ENCODE measurements at regions of chr4 and their contacts with region 1.

Region 1: GRCh38 chr4:139177868-139178611 is 1.0 kb upstream of the ELF2 start:
- DNase-seq: peak; percentile 96 to 98 (median 97)
- ATAC-seq: peak; percentile 82 to 89 (median 84)
- H3K4me3 ChIP-seq: peak overlapping the region; percentile 76 to 100 (median 98)
- H3K27ac ChIP-seq: peak overlapping the region; percentile 90 to 100 (median 100)
- H3K4me1 ChIP-seq: peaks cover 0 to 26% (median 14%) of the 10 kb centered on the region in 12 donors
- H3K27me3 ChIP-seq: no peaks in the 10 kb centered on the region
- CTCF ChIP-seq: peak in 2 of 12 donors; percentile 3 to 9
- POLR2A ChIP-seq: peak in 1 of 2 donors; percentile 90

Region 2: DNA sequence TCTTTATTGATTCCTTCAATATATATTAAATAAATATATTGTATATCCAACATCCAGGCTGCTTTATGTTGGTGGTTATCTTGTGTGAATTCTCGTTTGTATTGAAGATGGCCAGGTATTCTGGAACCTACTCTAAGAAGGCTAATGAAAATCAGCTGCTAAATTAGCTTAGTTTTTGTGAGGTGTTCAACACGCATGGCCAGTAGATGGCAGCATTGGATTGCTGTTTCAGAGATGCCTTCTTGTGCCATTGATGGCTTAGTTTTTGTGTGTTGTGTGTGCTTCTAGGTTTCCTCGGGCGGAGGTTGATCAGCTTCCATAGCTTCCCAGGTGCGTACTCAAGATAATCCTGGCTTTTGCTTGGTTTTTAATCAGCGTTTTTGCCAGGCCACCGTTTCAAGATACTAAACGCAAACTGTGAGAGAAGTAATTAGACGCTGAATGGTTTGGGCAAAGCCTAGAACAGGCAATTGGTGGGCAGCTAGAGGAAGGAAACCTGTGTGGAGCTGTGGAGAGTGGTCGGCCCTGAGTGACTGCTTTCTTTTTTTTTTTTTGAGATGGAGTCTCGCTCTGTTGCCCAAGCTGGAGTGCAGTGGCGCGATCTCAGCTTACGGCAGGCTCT is 147.3 kb before region 1 on chr4:
- intact Hi-C with region 1: loop called in 3 of 10 experiments (anchors 10 kb)
- DNase-seq: peak in 4 of 5 donors; percentile 63 to 75 (median 66)
- ATAC-seq: peak in 3 of 4 donors; percentile 28 to 47 (median 33)
- H3K4me3 ChIP-seq: no peak overlapping the region
- H3K27ac ChIP-seq: peak overlapping the region in 2 of 12 donors; percentile 90 to 93
- H3K4me1 ChIP-seq: peaks cover 0 to 20% (median 11%) of the 10 kb centered on the region in 12 donors
- H3K27me3 ChIP-seq: no peaks in the 10 kb centered on the region
- CTCF ChIP-seq: peak; percentile 61 to 87 (median 79)
- POLR2A ChIP-seq: no peak

Region 3: GRCh38 chr4:139099366-139099982 is 78.6 kb before region 1 on chr4:
- intact Hi-C with region 1: loop called in 8 of 10 experiments (anchors 2 to 5 kb)
- DNase-seq: peak in 4 of 5 donors; percentile 60 to 73 (median 69)
- ATAC-seq: peak in 3 of 4 donors; percentile 71 to 86 (median 77)
- H3K4me3 ChIP-seq: no peak overlapping the region
- H3K27ac ChIP-seq: no peak overlapping the region
- H3K4me1 ChIP-seq: peaks cover 0 to 5% (median 0%) of the 10 kb centered on the region in 12 donors
- H3K27me3 ChIP-seq: no peaks in the 10 kb centered on the region
- CTCF ChIP-seq: peak; percentile 77 to 93 (median 84)
- POLR2A ChIP-seq: no peak

Region 4: GRCh38 chr4:139295206-139295941 is 117.3 kb after region 1 on chr4:
- intact Hi-C with region 1: loop called in 9 of 10 experiments (anchors 1 to 5 kb)
- DNase-seq: peak; percentile 96 to 99 (median 98)
- ATAC-seq: peak; percentile 91 to 97 (median 96)
- H3K4me3 ChIP-seq: peak overlapping the region; percentile 61 to 85 (median 71)
- H3K27ac ChIP-seq: peak overlapping the region; percentile 75 to 93 (median 85)
- H3K4me1 ChIP-seq: peaks cover 0 to 49% (median 28%) of the 10 kb centered on the region in 12 donors
- H3K27me3 ChIP-seq: no peaks in the 10 kb centered on the region
- CTCF ChIP-seq: peak; percentile 84 to 99 (median 96)
- POLR2A ChIP-seq: peak in 1 of 2 donors; percentile 49

Region 5: GRCh38 chr4:139453371-139454110 is 275.5 kb after region 1 on chr4:
- intact Hi-C with region 1: loop called in 1 of 10 experiments (anchors 2 kb)
- DNase-seq: peak; percentile 98 to 99 (median 98)
- ATAC-seq: peak; percentile 98
- H3K4me3 ChIP-seq: peak overlapping the region; percentile 71 to 95 (median 90)
- H3K27ac ChIP-seq: peak overlapping the region; percentile 88 to 99 (median 97)
- H3K4me1 ChIP-seq: peaks cover 9 to 55% (median 33%) of the 10 kb centered on the region in 12 donors
- H3K27me3 ChIP-seq: no peaks in the 10 kb centered on the region
- CTCF ChIP-seq: peak in 5 of 12 donors; percentile 5 to 46 (median 7)
- POLR2A ChIP-seq: peak in 1 of 2 donors; percentile 73

Region 6: GRCh38 chr4:139501927-139502899 is 324.2 kb after region 1 on chr4:
- intact Hi-C with region 1: no loop called
- DNase-seq: no peak
- ATAC-seq: no peak
- H3K4me3 ChIP-seq: no peak overlapping the region
- H3K27ac ChIP-seq: no peak overlapping the region
- H3K4me1 ChIP-seq: peaks cover 0 to 17% (median 0%) of the 10 kb centered on the region in 12 donors
- H3K27me3 ChIP-seq: no peaks in the 10 kb centered on the region
- CTCF ChIP-seq: no peak
- POLR2A ChIP-seq: no peak

Measured in heart left ventricle (tissue), 16 donors.